Activated CD4-positive, alpha-beta T cell treated with anti-CD3 and anti-CD28 coated beads for 36 hours (primary cell): ENCODE measurements at regions of chr21 and their contacts with region 1.

Region 1: DNA sequence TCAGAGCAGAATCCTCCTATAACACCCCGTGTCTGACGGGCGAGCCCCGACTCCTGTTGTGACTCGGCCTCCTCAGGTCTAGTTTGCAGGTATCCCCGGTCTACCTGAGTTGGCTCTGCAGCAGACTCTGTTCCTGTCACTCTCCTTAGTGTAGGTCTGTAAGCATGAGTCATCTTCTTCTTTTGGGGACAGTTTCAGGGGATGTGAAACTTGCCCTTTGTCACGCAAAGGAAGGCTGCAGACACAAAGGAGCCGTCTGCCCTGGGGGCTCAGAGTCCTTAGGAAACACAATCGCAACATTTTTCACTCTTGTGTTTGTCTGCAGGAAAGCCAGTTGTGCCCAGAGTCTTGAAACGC is 183.2 kb downstream of the RUNX1 start:
- DNase-seq: peak; percentile 69
- ATAC-seq: peak; percentile 91
- H3K4me3 Mint-ChIP-seq: peak overlapping the region; percentile 43
- H3K27ac Mint-ChIP-seq: peak overlapping the region; percentile 76
- H3K4me1 Mint-ChIP-seq: peaks cover 69% of the 10 kb centered on the region
- H3K27me3 Mint-ChIP-seq: no peaks in the 10 kb centered on the region

Region 2: GRCh38 chr21:34845521-34846451 is 20.1 kb before region 1 on chr21:
- CTCF ChIA-PET with region 1: no interaction called
- POLR2A ChIA-PET with region 1: no interaction called
- intact Hi-C with region 1: loop called in 1 of 2 experiments (anchors 2 kb)
- DNase-seq: peak; percentile 59
- ATAC-seq: peak; percentile 71
- H3K4me3 Mint-ChIP-seq: no peak overlapping the region
- H3K27ac Mint-ChIP-seq: peak overlapping the region; percentile 74
- H3K4me1 Mint-ChIP-seq: peaks cover 39% of the 10 kb centered on the region
- H3K27me3 Mint-ChIP-seq: no peaks in the 10 kb centered on the region